BJ (cell line): ENCODE measurements at regions of chr7 and their contacts with region 1.

Region 1: DNA sequence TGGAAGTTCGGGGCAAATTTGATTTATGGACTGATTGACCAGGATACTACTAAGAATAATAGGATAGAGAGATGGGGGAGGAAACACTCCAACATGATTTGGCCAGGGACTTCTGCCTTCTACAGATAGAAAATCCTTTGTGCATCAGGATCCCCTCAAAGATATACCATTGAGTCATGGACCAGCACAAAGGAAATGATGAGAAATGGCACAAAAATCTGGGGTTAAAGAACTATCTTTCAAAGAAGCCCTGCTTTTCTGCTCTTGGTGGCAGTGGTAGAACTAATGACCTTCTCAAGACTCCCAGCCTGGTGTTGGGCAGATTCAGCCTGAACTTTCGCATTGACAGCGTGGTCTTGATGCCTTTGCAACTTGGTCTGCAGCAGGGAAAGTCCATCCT is 27.6 kb upstream of the LAMB1 start:
- DNase-seq: no peak
- H3K4me3 ChIP-seq: no peak overlapping the region
- H3K27me3 ChIP-seq: no peaks in the 10 kb centered on the region
- CTCF ChIP-seq: no peak

Region 2: GRCh38 chr7:107262857-107263256 is 767.7 kb before region 1 on chr7:
- CTCF ChIA-PET with region 1: no interaction called
- POLR2A ChIA-PET with region 1: interaction called, 10 read pairs
- DNase-seq: no peak
- H3K4me3 ChIP-seq: no peak overlapping the region
- H3K27me3 ChIP-seq: no peaks in the 10 kb centered on the region
- CTCF ChIP-seq: no peak

Region 3: DNA sequence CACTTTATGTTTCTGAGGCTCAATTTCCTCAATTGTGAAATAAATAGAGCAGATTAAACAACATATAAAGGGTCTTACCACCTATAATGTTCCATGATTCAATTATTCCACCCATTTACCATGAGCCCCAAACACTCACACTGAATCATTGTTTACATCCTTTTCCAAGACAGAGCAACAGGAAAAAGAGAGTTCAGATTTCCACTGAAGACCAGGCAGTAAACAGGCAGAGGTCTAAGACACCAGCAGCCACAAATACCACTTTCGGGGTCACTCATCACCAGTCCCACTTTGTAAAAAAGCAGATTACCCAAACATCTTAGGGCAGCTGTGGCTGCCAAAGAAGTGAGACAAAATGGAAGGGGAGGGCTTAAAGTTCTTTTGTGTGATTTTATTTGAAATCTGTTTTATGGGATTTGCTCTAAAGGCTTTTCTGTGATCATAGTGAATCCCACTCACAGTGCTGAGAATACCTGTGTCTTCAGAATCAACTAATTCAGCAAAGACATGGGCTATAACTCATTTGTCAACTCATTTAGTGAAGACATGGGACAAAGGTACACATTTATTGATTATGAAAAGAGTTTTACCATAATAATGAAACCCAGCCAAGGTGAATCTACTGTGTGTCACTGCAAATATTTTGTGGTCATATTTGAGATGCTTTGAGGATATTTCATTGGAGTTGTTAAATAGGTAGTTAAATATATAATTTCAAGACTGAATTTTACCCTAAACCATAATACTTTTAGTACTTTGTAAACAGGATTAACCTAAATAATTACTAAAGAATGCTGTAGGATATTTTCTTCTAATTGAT is 164.3 kb before region 1 on chr7:
- CTCF ChIA-PET with region 1: no interaction called
- POLR2A ChIA-PET with region 1: no interaction called
- DNase-seq: no peak
- H3K4me3 ChIP-seq: no peak overlapping the region
- H3K27me3 ChIP-seq: no peaks in the 10 kb centered on the region
- CTCF ChIP-seq: no peak